Head of caudate nucleus (tissue), 42 donors: ENCODE measurements at regions of chr11 and their contacts with region 1.

Region 1: DNA sequence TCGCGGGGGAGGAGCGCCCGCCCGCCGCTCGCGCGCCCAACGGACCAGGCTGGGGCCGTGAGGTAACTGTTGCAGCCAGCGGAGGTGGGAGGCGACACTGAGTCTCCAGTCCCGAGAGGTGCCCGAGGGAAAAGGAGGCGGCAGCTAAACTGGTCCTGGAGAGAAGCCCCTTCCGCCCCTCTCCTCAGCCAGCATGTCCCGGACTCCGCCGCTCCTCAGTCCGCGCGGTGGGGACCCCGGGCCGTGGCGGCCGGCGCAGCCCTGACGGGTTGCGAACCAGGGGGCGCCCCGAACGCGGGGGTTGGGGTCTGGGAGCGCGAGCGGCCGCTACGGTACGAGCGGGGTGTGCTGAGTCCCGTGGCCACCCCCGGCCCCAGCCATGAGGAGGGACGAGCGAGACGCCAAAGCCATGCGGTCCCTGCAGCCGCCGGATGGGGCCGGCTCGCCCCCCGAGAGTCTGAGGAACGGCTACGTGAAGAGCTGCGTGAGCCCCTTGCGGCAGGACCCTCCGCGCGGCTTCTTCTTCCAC is at the start of gene PDE3B:
- DNase-seq: peak; percentile 23 to 84 (median 61)

Region 2: DNA sequence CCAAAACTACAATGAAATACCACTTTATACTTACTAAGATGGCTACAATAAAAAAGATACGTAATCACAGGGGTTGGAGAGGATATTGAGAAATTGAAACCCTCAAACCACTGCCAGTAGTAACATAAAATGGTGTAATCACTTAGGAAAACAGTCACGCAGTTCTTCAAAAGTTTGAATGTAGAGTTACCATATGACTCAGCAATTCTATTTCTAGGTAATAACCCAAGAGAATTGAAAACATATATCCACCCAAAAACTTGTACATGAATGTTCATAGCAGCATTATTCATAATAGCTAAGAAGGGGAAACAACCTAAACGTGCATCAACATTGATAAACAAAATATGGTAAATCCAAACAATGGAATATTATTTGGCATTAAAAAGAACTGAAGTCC is 99.2 kb before region 1 on chr11:
- intact Hi-C with region 1: loop called (anchors 5 kb)
- DNase-seq: no peak

Region 3: DNA sequence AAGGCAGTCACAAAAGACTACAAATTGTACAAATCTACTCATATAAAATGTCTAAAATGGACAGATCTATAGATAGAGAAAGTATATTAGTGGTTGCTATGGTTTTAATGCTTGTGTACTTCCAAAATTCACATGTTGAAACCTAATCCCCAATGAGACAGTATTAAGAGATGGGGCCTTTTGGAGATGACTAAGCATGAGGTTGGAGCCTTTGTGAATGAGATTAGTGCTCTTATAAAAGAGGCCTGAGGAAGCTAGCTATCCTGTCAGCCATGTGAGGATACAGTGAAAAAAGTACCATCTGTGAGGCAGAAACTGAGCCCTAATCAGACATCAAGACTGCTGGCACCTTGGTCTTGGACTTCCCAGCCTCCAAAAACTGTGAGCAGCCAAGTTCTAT is 165.7 kb after region 1 on chr11:
- intact Hi-C with region 1: no loop called
- DNase-seq: no peak

Region 4: DNA sequence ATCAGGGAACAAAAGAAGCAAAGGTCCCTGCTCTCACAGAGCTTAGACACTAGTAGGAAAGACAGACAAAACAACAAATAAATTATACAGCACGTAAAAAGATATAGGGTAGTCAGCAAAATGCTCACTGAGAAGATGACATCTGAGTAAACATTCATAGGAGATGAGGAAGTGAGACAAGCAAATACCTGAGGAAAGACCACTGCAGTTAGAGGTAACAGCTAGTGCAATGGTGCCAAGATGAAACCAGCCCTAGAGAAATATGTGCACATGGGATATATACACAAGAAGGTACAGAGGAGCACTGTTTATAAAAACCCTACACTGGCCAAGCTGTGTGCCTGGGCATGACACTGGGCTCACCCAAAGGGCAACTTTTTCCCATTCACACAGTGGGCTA is 238.4 kb after region 1 on chr11:
- intact Hi-C with region 1: no loop called
- DNase-seq: no peak

Region 5: DNA sequence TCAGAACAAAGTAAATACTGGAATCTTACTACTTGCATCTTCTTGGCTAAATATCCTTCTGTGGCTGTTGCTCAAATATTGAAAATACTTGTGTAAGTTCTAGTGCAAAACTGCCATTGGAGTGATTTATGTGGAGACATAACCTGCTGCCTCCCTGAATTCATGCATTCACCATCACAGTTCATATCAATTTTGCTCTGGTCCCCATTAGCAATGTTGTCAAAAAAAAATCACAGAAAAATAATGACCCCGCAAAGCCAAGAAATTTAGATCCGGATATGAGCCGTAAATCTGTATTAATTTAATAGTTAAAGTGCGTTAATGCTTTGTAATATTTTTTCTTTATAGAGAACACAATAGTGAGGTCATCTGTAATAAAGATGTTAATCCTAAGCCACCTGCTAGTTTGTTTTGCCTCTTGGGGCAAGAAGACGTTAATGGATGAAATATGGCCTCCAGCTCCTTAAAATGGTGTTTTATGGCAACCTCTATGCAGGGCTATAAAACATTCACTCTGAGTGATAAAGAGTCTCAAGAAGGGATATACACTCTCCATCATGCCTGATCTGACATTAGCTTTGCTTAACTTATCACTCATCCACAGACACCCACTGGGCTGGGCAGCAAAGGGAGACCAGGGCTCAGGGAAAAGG is 726.9 kb after region 1 on chr11:
- intact Hi-C with region 1: no loop called
- DNase-seq: no peak